Head of caudate nucleus (tissue), 42 donors: ENCODE measurements at regions of chr14 and their contacts with region 1.

Region 1: DNA sequence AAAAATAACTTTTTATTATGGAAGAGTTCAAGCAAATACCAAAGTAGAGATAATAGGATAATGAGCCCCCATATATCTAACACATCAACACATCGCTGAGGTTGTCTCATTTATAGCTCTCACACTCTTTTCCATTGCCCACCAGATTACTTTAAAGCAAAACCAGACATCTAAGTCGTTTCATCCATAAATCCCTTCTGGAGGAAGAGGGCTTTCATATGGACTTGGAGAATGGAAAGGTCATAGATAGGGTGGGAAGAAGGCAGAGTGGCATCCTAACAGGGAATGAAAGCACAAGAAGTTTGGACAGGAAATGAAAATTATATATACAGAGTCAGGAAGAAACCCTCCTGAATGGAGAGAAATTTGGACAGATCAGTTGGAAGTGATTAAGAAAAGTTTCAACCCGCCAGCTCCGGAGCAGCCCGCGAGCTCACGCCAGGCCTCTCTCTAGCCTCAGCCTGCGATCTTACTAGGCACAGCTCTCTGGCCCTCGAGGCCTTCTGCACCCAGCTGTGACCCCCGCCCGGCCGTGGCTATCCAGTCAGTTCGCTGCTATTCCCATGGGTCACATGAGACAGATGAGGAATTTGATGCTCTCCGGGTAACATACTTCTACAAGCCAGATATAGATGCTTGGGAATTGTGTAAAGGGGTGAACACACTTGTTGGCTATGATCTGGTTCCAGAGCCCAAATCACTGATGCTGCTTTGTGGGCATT is 48.4 kb upstream of the NID2 start:
- DNase-seq: peak in 4 of 42 donors; percentile 10 to 25 (median 12)

Region 2: DNA sequence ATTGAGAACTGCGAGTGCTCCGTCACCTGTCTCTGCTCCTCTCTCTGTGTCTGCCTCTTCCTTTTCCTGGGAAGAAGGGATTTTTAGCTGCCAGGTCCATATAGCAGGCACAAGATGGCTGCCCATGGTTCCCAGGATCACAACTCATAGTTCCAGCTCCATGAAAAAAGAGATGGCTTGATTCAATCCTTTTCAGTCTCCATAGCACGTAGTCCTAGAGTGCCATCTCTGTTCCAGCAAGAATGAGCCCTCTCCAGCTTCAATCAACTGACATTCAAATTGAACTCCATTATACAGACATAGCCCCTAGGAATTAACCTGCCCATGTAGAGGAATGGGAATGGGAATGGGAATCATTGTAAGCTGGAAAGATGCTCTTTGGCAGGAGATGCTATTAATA is 162.6 kb before region 1 on chr14:
- intact Hi-C with region 1: no loop called
- DNase-seq: no peak

Region 3: GRCh38 chr14:52076334-52076733 is 40.9 kb before region 1 on chr14:
- intact Hi-C with region 1: loop called (anchors 5 kb)
- DNase-seq: no peak

Region 4: DNA sequence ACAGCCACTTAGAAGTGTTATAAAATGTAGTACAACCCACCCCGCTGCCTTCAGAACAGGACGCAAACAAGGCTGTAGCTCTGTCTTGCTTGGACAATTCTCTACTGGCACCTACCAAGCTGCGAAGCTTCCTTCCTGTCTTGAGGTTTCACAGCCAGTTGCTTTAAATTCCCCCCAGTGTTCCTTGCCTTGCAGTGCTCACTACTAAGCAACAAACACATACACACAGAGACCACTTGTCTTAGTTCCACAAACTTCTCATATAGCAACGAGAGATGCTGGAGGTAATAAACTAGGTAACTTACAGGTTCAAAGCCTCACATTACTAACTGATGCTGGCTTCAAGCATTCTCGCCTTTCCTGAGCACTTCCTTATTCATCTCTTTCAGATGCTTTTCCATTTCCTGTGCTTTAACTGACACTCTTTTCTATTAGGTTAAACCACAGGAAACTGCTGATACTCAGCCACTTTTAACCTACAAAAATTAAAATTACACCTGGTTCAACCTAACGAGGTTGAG is 58.8 kb after region 1 on chr14:
- intact Hi-C with region 1: no loop called
- DNase-seq: no peak